IMR-90 (cell line): ENCODE measurements at regions of chr2 and their contacts with region 1.

Region 1: DNA sequence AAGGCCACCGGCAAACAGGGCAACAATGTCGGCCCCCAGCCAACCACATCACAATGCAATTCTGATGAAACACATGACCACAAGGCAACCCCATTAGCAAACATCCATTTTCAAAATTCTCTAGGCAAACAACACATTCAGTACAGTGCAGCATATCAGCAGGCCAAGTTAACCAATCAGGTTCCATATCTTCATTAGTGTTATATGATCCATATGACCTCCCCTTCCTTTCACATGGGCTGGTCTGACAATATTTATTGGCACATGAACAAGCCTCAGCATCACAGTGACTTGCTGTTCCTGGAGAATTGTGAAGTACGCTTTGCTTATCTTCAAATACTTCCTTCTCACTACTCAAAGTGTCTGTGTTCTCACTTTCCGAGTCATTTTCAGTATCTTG is 19.8 kb downstream of the RNF103 start:
- DNase-seq: no peak
- ATAC-seq: no peak
- H3K4me3 ChIP-seq: no peak overlapping the region
- H3K27ac ChIP-seq: no peak overlapping the region
- H3K4me1 ChIP-seq: no peaks in the 10 kb centered on the region
- H3K27me3 ChIP-seq: no peaks in the 10 kb centered on the region
- CTCF ChIP-seq: no peak
- POLR2A ChIP-seq: no peak
- RAD21 ChIP-seq: no peak

Region 2: GRCh38 chr2:86518481-86518880 is 85.4 kb before region 1 on chr2:
- CTCF ChIA-PET with region 1: no interaction called
- POLR2A ChIA-PET with region 1: no interaction called
- dilution Hi-C with region 1: no loop called
- in situ Hi-C with region 1: loop called (anchors 10 kb)
- intact Hi-C with region 1: no loop called
- DNase-seq: no peak
- ATAC-seq: peak; percentile 49; the same call in 1 of the 2 replicates
- H3K4me3 ChIP-seq: no peak overlapping the region
- H3K27ac ChIP-seq: no peak overlapping the region
- H3K4me1 ChIP-seq: no peaks in the 10 kb centered on the region; the same call in 1 of the 2 replicates
- H3K27me3 ChIP-seq: no peaks in the 10 kb centered on the region
- CTCF ChIP-seq: peak; percentile 29; the same call in 1 of the 2 replicates
- POLR2A ChIP-seq: no peak
- RAD21 ChIP-seq: no peak